ENCODE measurements at regions of chr3 and their contacts with region 1.

Region 1: GRCh38 chr3:107927361-107928083 is 163.3 kb downstream of the CD47 start:
- DNase-seq: peak; percentile 91
- H3K4me3 ChIP-seq: peak overlapping the region; percentile 64 to 72
- H3K27ac ChIP-seq: no peak overlapping the region; a peak in 1 of 4 replicates
- H3K4me1 ChIP-seq: peaks cover 0 to 3% of the 10 kb centered on the region in 2 experiments; a peak in 1 of 4 replicates
- H3K27me3 ChIP-seq: no peaks in the 10 kb centered on the region
- CTCF ChIP-seq: peak; percentile 98
- EP300 ChIP-seq: peak in 1 of 2 experiments; percentile 8; a peak in 1 of 4 replicates
- RAD21 ChIP-seq: peak; percentile 72

Region 2: DNA sequence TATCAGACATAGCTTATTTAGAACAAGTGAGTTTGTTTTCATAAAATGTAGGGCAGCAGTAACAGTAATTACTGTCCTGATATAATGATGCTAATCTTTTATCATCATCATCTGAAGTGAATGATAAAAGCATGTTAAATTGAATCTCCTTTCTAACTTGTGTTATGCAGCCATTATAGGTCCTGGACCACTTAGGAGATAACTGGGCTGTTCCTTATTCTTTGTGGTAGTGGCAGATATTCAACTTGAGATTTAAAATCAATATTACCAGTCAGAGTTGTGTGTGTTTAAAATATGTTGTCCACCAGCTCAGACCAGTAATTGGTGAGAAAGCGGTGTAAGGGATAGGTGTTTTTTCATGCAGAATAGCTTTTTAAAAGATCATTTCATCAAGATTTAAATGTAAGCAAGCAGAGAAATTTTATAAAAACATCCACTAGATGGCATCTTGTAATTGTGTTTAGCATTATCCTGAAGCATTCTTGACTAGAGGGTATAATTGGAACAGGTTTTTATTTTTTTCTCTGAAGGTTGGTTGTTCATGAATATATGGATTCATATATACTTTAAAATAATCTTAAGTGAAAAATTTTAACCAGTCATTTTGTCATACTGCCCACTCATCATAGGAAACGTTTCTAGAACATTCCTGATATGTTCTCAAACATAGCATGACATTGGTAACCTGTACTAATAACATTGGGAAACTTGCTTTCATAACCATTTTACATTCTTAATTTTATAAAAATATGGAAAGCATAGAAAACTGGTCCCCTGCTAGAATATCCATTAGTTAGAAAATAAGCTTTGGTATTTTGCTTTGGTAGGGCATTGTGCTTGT is 250.8 kb before region 1 on chr3:
- CTCF ChIA-PET with region 1: interaction called, 23 read pairs
- POLR2A ChIA-PET with region 1: no interaction called
- DNase-seq: peak; percentile 29
- H3K4me3 ChIP-seq: no peak overlapping the region; a peak in 1 of 4 replicates
- H3K27ac ChIP-seq: no peak overlapping the region
- H3K4me1 ChIP-seq: no peaks in the 10 kb centered on the region; a peak in 2 of 4 replicates
- H3K27me3 ChIP-seq: no peaks in the 10 kb centered on the region
- CTCF ChIP-seq: peak; percentile 74
- EP300 ChIP-seq: no peak
- RAD21 ChIP-seq: peak; percentile 64

Region 3: GRCh38 chr3:107861904-107862303 is 65.6 kb before region 1 on chr3:
- CTCF ChIA-PET with region 1: no interaction called
- POLR2A ChIA-PET with region 1: no interaction called
- DNase-seq: no peak
- H3K4me3 ChIP-seq: no peak overlapping the region
- H3K27ac ChIP-seq: no peak overlapping the region
- H3K4me1 ChIP-seq: no peaks in the 10 kb centered on the region
- H3K27me3 ChIP-seq: no peaks in the 10 kb centered on the region
- CTCF ChIP-seq: no peak
- EP300 ChIP-seq: no peak
- RAD21 ChIP-seq: no peak

Region 4: GRCh38 chr3:107897471-107898061 is 30.0 kb before region 1 on chr3:
- CTCF ChIA-PET with region 1: interaction called, 12 read pairs
- POLR2A ChIA-PET with region 1: no interaction called
- DNase-seq: no peak
- H3K4me3 ChIP-seq: no peak overlapping the region
- H3K27ac ChIP-seq: no peak overlapping the region
- H3K4me1 ChIP-seq: peaks cover 0 to 8% of the 10 kb centered on the region in 2 experiments; a peak in 2 of 4 replicates
- H3K27me3 ChIP-seq: no peaks in the 10 kb centered on the region
- CTCF ChIP-seq: no peak
- EP300 ChIP-seq: no peak
- RAD21 ChIP-seq: no peak

Region 5: DNA sequence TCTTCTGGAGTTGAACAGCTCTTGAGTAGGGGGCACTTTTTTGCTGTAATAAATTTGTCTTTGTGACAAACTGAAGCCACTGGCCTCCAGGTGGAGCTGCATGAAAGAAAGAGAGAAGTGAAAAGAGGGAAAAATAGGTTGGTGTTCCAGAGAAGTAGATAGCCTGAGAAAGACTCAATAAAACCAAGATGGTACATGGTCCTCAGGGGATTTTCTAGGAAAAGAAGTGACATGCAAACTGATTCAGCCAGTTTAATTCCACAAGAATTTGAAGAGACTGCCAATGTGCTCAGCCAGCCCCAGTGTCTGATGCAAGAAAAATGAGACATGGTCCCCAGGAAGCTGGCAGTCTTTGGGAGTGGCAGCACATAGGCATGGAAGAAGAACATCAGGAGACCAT is 10.6 kb after region 1 on chr3:
- CTCF ChIA-PET with region 1: interaction called, 13 read pairs
- POLR2A ChIA-PET with region 1: no interaction called
- DNase-seq: peak; percentile 19
- H3K4me3 ChIP-seq: no peak overlapping the region
- H3K27ac ChIP-seq: no peak overlapping the region
- H3K4me1 ChIP-seq: no peaks in the 10 kb centered on the region
- H3K27me3 ChIP-seq: no peaks in the 10 kb centered on the region
- CTCF ChIP-seq: peak; percentile 66
- EP300 ChIP-seq: no peak
- RAD21 ChIP-seq: peak; percentile 84

Region 6: DNA sequence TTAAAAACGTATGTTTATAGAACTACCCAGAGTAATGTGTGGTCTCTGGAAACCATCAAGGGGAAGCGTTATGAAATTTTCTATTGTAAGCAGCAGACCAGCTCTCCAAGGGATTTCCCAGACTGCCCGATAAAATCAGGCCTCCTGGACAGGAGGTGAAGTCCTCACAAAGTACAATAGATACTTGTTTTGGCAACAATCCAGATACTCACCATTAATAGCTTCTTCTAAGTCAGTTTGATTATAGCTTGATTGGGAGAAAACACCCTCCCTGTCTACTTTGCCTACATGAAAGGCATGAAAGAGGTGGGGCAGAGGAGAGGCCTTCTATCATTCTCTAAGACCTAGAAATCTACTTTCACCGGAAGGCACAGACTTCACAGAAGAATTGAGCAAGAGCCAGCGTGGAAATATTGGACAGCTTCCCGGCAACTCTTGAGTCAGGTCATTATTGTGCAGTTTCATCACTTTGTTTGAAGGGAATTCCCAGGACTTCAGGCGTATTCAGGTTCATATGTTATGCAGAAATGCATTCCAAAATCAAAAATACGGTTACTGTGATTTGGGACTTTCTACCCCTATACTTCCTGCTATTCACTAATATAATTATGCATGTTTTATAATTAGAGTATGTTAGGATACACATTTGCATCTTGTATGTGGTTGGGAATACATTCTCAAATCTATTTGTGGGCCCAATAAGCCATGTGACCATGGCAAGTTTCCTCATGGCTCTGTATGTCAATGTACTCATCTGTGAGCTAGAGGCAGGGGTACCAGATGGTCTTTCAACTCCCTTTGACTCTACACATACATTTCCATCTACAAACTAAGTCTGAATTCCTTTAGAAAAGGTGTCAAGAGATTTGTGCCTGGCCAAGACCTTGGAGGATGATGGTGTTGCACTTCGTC is 59.8 kb after region 1 on chr3:
- CTCF ChIA-PET with region 1: interaction called, 14 read pairs
- POLR2A ChIA-PET with region 1: no interaction called
- DNase-seq: peak; percentile 59
- H3K4me3 ChIP-seq: 0 out of 4 replicates have a peak overlapping the region, but pooled peaks of 1 of the 2 experiments have one; percentile 1
- H3K27ac ChIP-seq: peak overlapping the region; percentile 85 to 94
- H3K4me1 ChIP-seq: peaks cover 31 to 45% of the 10 kb centered on the region in 2 experiments
- H3K27me3 ChIP-seq: no peaks in the 10 kb centered on the region
- CTCF ChIP-seq: no peak
- EP300 ChIP-seq: peak; percentile 80 to 96; a peak in 3 of 4 replicates
- RAD21 ChIP-seq: peak; percentile 36

Measured in SK-N-SH (cell line).